GM23248 (cell line): ENCODE measurements at regions of chr9 and their contacts with region 1.

Region 1: DNA sequence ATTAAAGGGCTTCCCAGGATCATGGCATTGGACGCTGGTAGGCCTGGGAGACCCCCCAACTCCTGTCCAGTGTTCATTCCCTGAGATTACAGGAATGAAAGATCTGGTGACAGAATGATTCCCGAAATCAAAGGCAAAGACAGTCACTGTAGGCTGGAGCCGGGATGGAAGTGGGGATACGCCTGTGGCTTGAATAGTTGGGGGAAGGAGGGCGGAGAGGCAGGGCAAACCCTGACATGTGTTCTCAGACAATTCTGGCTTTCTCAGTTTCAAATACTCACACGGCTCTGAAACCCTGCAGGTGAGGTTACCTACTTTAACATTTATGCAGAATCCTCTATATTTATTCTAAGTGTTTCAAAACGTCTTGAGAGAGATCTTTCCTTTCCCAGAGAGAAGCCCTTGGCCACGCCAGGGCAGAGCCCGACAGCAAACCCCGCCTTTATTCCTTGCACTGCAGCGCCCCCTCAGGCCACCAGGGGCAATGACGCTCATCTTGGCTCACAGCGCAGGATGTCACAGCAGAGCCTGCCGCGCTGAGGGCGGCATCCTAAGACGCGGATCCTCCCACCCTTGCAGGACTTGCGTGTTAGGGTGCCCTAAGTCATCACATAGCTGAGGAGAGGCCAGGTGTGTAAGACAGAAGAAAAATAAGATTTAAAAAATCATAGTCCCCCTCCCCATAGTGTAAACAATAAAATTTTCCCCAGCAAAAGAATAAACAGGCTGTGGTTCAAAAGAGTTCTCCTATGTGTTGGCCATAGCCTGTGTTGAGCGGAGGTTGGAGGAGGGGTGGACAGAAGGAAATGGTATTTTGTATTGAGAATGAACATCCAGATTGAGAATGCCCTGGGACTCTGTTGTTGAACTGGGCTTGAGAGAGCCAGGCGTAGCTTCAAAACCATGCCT is 284.5 kb downstream of the NTRK2 start:
- DNase-seq: peak; percentile 75
- H3K4me3 ChIP-seq: no peak overlapping the region
- H3K27ac ChIP-seq: no peak overlapping the region
- H3K4me1 ChIP-seq: no peaks in the 10 kb centered on the region
- H3K27me3 ChIP-seq: peaks cover 5% of the 10 kb centered on the region; the same call in 1 of the 2 replicates

Region 2: GRCh38 chr9:84404095-84404686 is 549.9 kb before region 1 on chr9:
- in situ Hi-C with region 1: loop called (anchors 25 kb)
- DNase-seq: peak; percentile 10
- H3K4me3 ChIP-seq: no peak overlapping the region
- H3K27ac ChIP-seq: no peak overlapping the region
- H3K4me1 ChIP-seq: no peaks in the 10 kb centered on the region
- H3K27me3 ChIP-seq: no peaks in the 10 kb centered on the region